PC-3 (cell line): ENCODE measurements at regions of chr1 and their contacts with region 1.

Region 1: GRCh38 chr1:97192872-97193572 is 471.4 kb downstream of the PTBP2 start:
- DNase-seq: peak; percentile 98
- ATAC-seq: peak; percentile 94
- H3K4me3 ChIP-seq: peak overlapping the region; percentile 21; the same call in 1 of the 2 replicates
- H3K27ac ChIP-seq: peak overlapping the region; percentile 55
- H3K4me1 ChIP-seq: peaks cover 37% of the 10 kb centered on the region
- H3K27me3 ChIP-seq: no peaks in the 10 kb centered on the region
- CTCF ChIP-seq: peak; percentile 55

Region 2: DNA sequence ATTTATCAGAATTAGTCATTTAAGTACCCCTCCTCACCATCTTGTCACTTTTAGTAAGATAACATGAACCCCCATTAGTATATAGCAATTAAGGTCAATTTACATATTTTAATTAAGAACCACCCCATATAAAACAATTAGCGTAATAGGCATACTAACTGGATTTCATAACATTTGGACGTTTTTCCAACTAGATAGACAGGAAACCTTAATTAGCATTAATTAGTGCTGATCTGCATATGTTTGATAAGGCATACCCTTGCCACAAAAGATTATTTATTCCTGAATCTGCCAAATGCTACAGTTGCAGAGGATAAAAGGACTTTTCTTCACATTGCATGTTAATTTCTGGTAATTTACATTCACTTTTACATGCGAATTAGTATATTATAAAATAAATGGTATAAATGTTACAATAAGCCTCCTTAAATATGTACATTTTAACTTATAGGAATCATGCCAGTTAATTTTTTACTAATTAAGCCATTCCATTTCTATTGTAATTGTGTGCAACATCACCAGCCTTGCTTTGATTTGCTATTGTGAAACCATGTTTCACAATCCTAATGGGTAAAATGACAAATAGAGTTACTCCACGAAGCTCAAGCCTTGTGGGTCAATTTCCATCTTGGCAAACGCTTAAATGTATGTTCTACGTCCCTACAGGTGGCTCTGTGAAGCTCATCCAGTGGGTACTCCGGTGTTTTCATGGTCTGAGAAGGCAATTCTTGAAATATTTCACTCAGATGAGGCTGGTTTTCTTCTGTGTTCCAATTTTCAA is 258.2 kb after region 1 on chr1:
- CTCF ChIA-PET with region 1: no interaction called
- POLR2A ChIA-PET with region 1: no interaction called
- intact Hi-C with region 1: no loop called
- DNase-seq: no peak
- ATAC-seq: no peak
- H3K4me3 ChIP-seq: no peak overlapping the region
- H3K27ac ChIP-seq: no peak overlapping the region
- H3K4me1 ChIP-seq: no peaks in the 10 kb centered on the region
- H3K27me3 ChIP-seq: no peaks in the 10 kb centered on the region
- CTCF ChIP-seq: no peak

Region 3: GRCh38 chr1:97529600-97529999 is 336.6 kb after region 1 on chr1:
- CTCF ChIA-PET with region 1: no interaction called
- POLR2A ChIA-PET with region 1: no interaction called
- intact Hi-C with region 1: loop called (anchors 5 kb)
- DNase-seq: no peak
- ATAC-seq: no peak
- H3K4me3 ChIP-seq: no peak overlapping the region
- H3K27ac ChIP-seq: no peak overlapping the region
- H3K4me1 ChIP-seq: no peaks in the 10 kb centered on the region
- H3K27me3 ChIP-seq: no peaks in the 10 kb centered on the region
- CTCF ChIP-seq: no peak

Region 4: GRCh38 chr1:97820470-97821188 is 627.6 kb after region 1 on chr1:
- CTCF ChIA-PET with region 1: no interaction called
- POLR2A ChIA-PET with region 1: no interaction called
- intact Hi-C with region 1: loop called (anchors 2 kb)
- DNase-seq: peak; percentile 76
- ATAC-seq: peak; percentile 72
- H3K4me3 ChIP-seq: no peak overlapping the region
- H3K27ac ChIP-seq: no peak overlapping the region
- H3K4me1 ChIP-seq: no peaks in the 10 kb centered on the region
- H3K27me3 ChIP-seq: no peaks in the 10 kb centered on the region
- CTCF ChIP-seq: peak; percentile 82